Ovary (tissue), 10 donors: ENCODE measurements at regions of chr2 and their contacts with region 1.

Region 1: GRCh38 chr2:231227309-231228162 is 29.1 kb downstream of the ARMC9 start:
- DNase-seq: peak; percentile 47 to 77 (median 62)
- H3K4me3 ChIP-seq: no peak overlapping the region
- H3K27ac ChIP-seq: peak overlapping the region in 1 of 2 donors; percentile 65
- H3K4me1 ChIP-seq: peaks cover 3% of the 10 kb centered on the region
- H3K27me3 ChIP-seq: no peaks in the 10 kb centered on the region
- CTCF ChIP-seq: peak; percentile 53 to 93 (median 85)
- EP300 ChIP-seq: no peak
- POLR2A ChIP-seq: no peak

Region 2: DNA sequence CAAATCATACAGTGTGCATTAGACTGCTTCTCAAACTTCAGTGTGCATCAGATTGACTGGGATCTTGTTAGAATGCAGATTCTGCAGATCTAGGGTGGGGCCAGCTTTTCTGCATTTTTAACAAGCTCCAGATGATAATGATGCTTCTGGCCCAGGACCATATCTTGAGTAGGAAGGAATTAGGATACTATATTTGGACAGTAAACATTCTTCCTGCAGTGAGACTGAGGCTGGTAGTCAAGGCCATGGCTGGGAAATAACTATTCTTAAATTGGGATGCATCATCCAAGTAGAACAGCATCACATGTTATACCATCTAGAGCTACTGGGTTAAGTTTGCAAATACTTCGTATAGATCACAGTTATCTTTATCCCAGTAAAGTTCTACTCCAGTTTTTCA is 57.5 kb before region 1 on chr2:
- intact Hi-C with region 1: no loop called
- DNase-seq: no peak
- H3K4me3 ChIP-seq: no peak overlapping the region
- H3K27ac ChIP-seq: no peak overlapping the region
- H3K4me1 ChIP-seq: no peaks in the 10 kb centered on the region
- H3K27me3 ChIP-seq: no peaks in the 10 kb centered on the region
- CTCF ChIP-seq: no peak
- EP300 ChIP-seq: no peak
- POLR2A ChIP-seq: no peak

Region 3: GRCh38 chr2:231270221-231271114 is 42.9 kb after region 1 on chr2:
- intact Hi-C with region 1: loop called in 1 of 4 experiments (anchors 10 kb)
- DNase-seq: peak; percentile 70 to 80 (median 74)
- H3K4me3 ChIP-seq: peak overlapping the region; percentile 12
- H3K27ac ChIP-seq: peak overlapping the region; percentile 87 to 91
- H3K4me1 ChIP-seq: peaks cover 8% of the 10 kb centered on the region
- H3K27me3 ChIP-seq: no peaks in the 10 kb centered on the region
- CTCF ChIP-seq: peak in 1 of 3 donors; percentile 17
- EP300 ChIP-seq: no peak
- POLR2A ChIP-seq: no peak

Region 4: DNA sequence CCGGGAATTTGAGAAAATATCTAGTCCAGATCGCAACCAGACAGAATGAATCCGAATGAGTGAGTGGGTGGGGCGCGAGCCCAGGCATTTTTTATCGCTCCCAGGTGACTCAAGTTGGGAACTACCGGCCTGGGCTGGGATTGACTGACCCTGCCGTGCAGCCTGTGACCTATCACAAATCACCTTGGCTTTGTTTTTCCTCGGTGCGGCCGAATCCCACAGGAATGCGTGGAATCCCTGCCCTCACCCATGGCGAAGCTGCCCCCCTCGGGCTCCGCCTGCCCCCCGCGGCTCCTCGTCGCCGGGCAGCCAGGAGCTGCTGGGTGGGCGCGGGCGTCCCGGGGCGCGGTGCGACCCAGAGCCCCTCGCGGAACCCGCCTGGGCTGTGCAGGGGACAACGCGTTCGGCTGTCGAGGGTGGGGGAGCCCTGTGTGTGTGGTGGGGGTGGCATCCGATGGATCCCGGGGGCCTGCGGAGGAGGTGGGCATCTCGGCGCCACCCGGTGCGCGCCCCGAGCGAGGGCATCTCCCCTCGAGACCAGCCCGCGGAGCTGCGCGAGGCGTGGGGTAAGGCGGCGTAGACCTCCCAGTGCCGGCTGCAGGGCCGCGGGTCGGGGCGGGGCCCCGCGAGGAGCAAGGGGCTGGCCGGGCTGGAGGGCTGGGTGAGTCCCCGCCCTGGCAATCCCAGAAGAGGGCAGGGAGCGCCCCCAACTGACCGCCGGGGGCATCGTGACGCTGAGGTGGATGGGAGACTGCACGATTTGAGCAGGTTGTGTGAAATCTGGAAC is 184.5 kb after region 1 on chr2:
- intact Hi-C with region 1: loop called in 3 of 4 experiments (anchors 2 to 10 kb)
- DNase-seq: peak; percentile 89 to 95 (median 93)
- H3K4me3 ChIP-seq: peak overlapping the region; percentile 67
- H3K27ac ChIP-seq: peak overlapping the region in 1 of 2 donors; percentile 36
- H3K4me1 ChIP-seq: peaks cover 5% of the 10 kb centered on the region
- H3K27me3 ChIP-seq: no peaks in the 10 kb centered on the region
- CTCF ChIP-seq: peak; percentile 85 to 94 (median 91)
- EP300 ChIP-seq: no peak
- POLR2A ChIP-seq: peak; percentile 21

Region 5: DNA sequence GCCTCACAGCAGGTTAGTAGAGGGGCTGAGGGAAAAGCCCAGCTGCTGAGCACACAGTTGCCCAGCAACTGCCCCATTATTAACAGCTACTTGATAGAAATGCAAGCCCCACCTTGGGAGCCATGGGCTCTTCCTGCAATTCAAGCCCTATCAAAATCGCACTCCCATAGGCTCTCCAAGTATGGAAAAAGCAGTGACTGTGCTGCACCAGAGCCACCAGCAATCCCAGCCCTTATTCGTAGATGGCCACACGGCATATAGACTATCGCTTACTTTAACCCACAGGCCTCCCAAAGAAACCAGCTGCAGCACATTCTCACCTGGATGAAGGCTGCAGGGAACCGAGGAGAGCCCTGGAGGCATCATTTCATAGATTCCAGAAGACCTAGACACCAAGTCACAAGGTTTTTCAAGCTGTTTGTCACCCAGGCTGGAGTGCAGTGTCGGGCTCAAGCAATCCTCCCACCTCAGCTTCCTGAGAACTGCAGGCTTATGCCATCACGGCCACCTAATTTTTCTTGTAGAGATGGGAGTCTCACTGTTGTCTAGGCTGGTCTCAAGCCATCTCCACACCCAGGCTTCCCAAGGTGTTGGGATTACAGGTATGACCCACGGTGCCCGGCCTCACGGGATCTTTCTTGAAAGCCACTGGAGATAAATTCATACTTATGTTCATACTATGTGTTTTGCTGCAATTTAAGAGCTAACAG is 225.4 kb after region 1 on chr2:
- intact Hi-C with region 1: loop called in 1 of 4 experiments (anchors 5 kb)
- DNase-seq: no peak
- H3K4me3 ChIP-seq: no peak overlapping the region
- H3K27ac ChIP-seq: no peak overlapping the region
- H3K4me1 ChIP-seq: no peaks in the 10 kb centered on the region
- H3K27me3 ChIP-seq: no peaks in the 10 kb centered on the region
- CTCF ChIP-seq: no peak
- EP300 ChIP-seq: no peak
- POLR2A ChIP-seq: no peak